CD14-positive monocyte (primary cell): ENCODE measurements at regions of chr16 and their contacts with region 1.

Region 1: GRCh38 chr16:21083729-21084268 is 66.8 kb downstream of the DNAH3 start:
- DNase-seq: peak; percentile 12 to 40 (median 27)
- H3K4me3 ChIP-seq: no peak overlapping the region
- H3K4me3 Mint-ChIP-seq: no peak overlapping the region
- H3K27ac ChIP-seq: no peak overlapping the region
- H3K27ac Mint-ChIP-seq: no peak overlapping the region
- H3K4me1 ChIP-seq: no peaks in the 10 kb centered on the region
- H3K4me1 Mint-ChIP-seq: no peaks in the 10 kb centered on the region
- H3K27me3 ChIP-seq: no peaks in the 10 kb centered on the region
- H3K27me3 Mint-ChIP-seq: peaks cover 0 to 3% (median 2%) of the 10 kb centered on the region in 3 donors
- CTCF ChIP-seq: peak; percentile 76

Region 2: DNA sequence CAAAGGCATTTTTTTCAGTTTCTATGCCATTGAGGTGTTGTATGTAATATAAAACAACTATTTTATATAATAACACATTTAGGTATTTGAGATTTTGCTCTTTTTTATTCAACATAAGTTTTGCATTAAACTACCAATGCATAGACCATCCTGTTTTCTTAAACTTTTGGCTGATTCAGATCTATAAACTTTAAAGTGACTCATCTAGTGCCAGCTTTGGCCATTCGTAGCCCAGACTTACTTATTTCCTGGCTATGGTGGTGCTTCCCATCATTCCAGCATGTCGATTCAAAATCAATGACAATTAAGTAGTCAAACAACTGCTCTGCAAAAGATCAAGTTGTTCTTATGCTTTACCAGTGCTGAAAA is 280.6 kb before region 1 on chr16:
- intact Hi-C with region 1: loop called in 1 of 2 experiments (anchors 5 kb)
- DNase-seq: no peak
- H3K4me3 ChIP-seq: no peak overlapping the region
- H3K4me3 Mint-ChIP-seq: no peak overlapping the region
- H3K27ac ChIP-seq: no peak overlapping the region
- H3K27ac Mint-ChIP-seq: no peak overlapping the region
- H3K4me1 ChIP-seq: peaks cover 19 to 25% of the 10 kb centered on the region in 2 donors
- H3K4me1 Mint-ChIP-seq: peaks cover 23% of the 10 kb centered on the region
- H3K27me3 ChIP-seq: no peaks in the 10 kb centered on the region
- H3K27me3 Mint-ChIP-seq: no peaks in the 10 kb centered on the region
- CTCF ChIP-seq: no peak

Region 3: DNA sequence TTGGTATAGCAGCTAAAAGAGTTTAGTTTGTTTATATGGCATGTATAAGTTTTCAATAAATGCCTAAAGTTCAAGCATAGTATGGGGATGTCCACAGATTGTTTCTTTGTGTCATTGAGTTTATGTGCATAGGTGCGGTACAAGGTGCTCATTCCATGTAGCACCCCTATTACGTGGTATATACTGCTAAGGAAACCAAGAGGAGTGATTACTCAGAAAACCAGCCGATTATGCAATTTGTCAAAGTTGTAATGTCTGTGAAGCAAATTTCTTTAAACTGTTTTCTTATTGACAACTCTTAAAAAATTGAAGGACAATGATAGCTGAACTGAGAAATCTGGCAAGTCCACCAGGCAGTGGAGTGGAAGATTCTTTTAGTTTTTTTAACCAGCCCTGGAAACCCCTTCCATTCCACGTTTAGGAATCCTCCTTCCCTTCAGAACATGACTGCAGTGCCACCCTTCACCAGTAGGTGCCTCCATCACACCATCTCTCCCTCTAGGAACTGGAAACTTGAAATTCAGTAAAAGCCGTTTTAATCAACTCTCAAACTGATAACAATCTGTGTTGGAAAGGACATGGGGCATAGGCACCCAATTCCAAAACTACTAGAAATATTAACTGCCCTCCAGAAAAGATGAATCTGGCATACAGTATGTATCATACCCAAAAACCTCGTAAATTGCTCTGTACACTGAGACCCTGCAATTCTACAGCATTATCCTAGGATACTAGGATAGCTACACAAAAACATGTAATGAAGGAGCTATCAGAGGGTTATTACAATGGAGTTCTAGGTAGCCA is 234.0 kb before region 1 on chr16:
- intact Hi-C with region 1: loop called (anchors 2 kb)
- DNase-seq: peak; percentile 43 to 65 (median 61)
- H3K4me3 ChIP-seq: peak overlapping the region in 1 of 3 experiments; percentile 0
- H3K4me3 Mint-ChIP-seq: no peak overlapping the region
- H3K27ac ChIP-seq: peak overlapping the region in 1 of 2 donors; percentile 28
- H3K27ac Mint-ChIP-seq: peak overlapping the region in 3 of 7 donors; percentile 63 to 70 (median 68)
- H3K4me1 ChIP-seq: peaks cover 7 to 12% of the 10 kb centered on the region in 2 donors
- H3K4me1 Mint-ChIP-seq: peaks cover 17% of the 10 kb centered on the region
- H3K27me3 ChIP-seq: no peaks in the 10 kb centered on the region
- H3K27me3 Mint-ChIP-seq: peaks cover 0 to 2% (median 0%) of the 10 kb centered on the region in 3 donors
- CTCF ChIP-seq: peak; percentile 99

Region 4: GRCh38 chr16:21033704-21034103 is 50.1 kb before region 1 on chr16:
- intact Hi-C with region 1: no loop called
- DNase-seq: no peak
- H3K4me3 ChIP-seq: no peak overlapping the region
- H3K4me3 Mint-ChIP-seq: no peak overlapping the region
- H3K27ac ChIP-seq: no peak overlapping the region
- H3K27ac Mint-ChIP-seq: no peak overlapping the region
- H3K4me1 ChIP-seq: no peaks in the 10 kb centered on the region
- H3K4me1 Mint-ChIP-seq: no peaks in the 10 kb centered on the region
- H3K27me3 ChIP-seq: no peaks in the 10 kb centered on the region
- H3K27me3 Mint-ChIP-seq: peaks cover 0 to 3% (median 0%) of the 10 kb centered on the region in 3 donors
- CTCF ChIP-seq: no peak